ENCODE measurements at regions of chr5 and their contacts with region 1.

Region 1: GRCh38 chr5:124741711-124742496 is 4.5 kb downstream of the ZNF608 start:
- DNase-seq: peak; percentile 84
- ATAC-seq: peak; percentile 23; the same call in 1 of the 2 replicates
- H3K4me3 ChIP-seq: peak overlapping the region; percentile 25; the same call in 1 of the 2 replicates
- H3K27ac ChIP-seq: peak overlapping the region; percentile 75
- H3K4me1 ChIP-seq: peaks cover 53% of the 10 kb centered on the region
- H3K27me3 ChIP-seq: no peaks in the 10 kb centered on the region
- CTCF ChIP-seq: no peak

Region 2: GRCh38 chr5:124655922-124656511 is 85.9 kb before region 1 on chr5:
- CTCF ChIA-PET with region 1: no interaction called
- POLR2A ChIA-PET with region 1: interaction called, 7 read pairs
- intact Hi-C with region 1: loop called (anchors 1 kb)
- DNase-seq: peak; percentile 87
- ATAC-seq: peak; percentile 84
- H3K4me3 ChIP-seq: peak overlapping the region; percentile 57
- H3K27ac ChIP-seq: peak overlapping the region; percentile 86
- H3K4me1 ChIP-seq: peaks cover 39% of the 10 kb centered on the region
- H3K27me3 ChIP-seq: no peaks in the 10 kb centered on the region
- CTCF ChIP-seq: no peak

Measured in PC-3 (cell line).